ENCODE measurements at regions of chr20 and their contacts with region 1.

Region 1: DNA sequence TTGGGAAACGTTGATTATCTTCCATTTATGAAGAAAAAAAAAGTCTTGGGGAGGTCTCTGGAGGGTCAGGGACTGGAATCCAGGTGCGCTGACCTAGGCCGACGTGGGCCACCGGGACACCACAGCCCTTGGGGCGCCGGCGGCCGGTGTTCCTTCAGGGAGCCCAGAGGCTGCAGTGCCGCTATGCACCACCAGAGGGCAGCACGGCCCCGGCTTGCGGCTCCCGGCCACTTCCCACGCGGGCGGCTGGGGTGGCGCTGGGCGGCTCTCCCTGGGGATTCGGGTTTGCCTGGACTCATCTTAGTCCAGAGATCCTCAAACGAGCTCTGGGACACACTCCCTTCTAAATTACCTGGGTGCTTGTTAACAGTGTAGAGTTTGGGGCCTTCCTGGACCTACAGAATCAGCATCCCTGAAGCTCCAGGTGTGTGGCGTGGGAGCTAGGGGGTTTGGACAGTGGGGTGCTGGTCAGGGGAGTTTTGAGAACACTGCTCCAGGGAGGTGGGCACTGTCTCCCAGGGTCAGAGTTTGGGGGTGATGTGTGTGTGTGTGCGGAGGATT is 23.0 kb upstream of the GTSF1L start:
- DNase-seq: peak; percentile 92
- ATAC-seq: peak; percentile 10
- H3K4me3 Mint-ChIP-seq: no peak overlapping the region
- H3K27ac Mint-ChIP-seq: peak overlapping the region; percentile 81
- H3K4me1 Mint-ChIP-seq: peaks cover 42% of the 10 kb centered on the region
- H3K27me3 Mint-ChIP-seq: peaks cover 4% of the 10 kb centered on the region

Region 2: GRCh38 chr20:43590392-43591323 is 159.2 kb before region 1 on chr20 and contains the start of gene IFT52:
- CTCF ChIA-PET with region 1: no interaction called
- POLR2A ChIA-PET with region 1: no interaction called
- intact Hi-C with region 1: loop called (anchors 1 kb)
- DNase-seq: peak; percentile 94
- ATAC-seq: peak; percentile 99
- H3K4me3 Mint-ChIP-seq: peak within 1 kb of the TSS; percentile 86
- H3K27ac Mint-ChIP-seq: peak within 1 kb of the TSS; percentile 96
- H3K4me1 Mint-ChIP-seq: peaks cover 12% of the 10 kb centered on the region
- H3K27me3 Mint-ChIP-seq: no peaks in the 10 kb centered on the region
- total RNA-seq, gene IFT52: 14.0 to 14.1 TPM

Region 3: DNA sequence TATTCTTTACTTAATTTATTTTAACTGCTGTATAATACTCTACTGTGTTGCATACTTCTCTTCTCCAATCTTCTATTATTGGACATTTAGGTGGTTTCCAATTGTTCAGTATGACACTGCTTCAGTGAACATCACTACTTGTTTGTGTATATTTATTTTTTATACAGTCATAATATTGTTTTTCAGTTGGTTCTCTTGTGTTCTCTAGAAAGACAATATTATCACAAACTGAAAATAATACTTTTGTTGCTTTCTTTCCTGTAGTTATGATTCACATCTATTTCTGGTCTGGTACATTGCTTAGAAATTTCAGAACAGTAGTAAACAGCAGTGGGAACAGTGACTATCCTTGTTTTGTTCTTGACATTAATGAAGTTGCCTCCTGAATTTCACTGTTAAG is 39.8 kb after region 1 on chr20:
- CTCF ChIA-PET with region 1: no interaction called
- POLR2A ChIA-PET with region 1: no interaction called
- intact Hi-C with region 1: loop called (anchors 2 to 5 kb)
- DNase-seq: no peak
- ATAC-seq: peak; percentile 51
- H3K4me3 Mint-ChIP-seq: no peak overlapping the region
- H3K27ac Mint-ChIP-seq: no peak overlapping the region
- H3K4me1 Mint-ChIP-seq: peaks cover 11% of the 10 kb centered on the region
- H3K27me3 Mint-ChIP-seq: peaks cover 3% of the 10 kb centered on the region

Region 4: DNA sequence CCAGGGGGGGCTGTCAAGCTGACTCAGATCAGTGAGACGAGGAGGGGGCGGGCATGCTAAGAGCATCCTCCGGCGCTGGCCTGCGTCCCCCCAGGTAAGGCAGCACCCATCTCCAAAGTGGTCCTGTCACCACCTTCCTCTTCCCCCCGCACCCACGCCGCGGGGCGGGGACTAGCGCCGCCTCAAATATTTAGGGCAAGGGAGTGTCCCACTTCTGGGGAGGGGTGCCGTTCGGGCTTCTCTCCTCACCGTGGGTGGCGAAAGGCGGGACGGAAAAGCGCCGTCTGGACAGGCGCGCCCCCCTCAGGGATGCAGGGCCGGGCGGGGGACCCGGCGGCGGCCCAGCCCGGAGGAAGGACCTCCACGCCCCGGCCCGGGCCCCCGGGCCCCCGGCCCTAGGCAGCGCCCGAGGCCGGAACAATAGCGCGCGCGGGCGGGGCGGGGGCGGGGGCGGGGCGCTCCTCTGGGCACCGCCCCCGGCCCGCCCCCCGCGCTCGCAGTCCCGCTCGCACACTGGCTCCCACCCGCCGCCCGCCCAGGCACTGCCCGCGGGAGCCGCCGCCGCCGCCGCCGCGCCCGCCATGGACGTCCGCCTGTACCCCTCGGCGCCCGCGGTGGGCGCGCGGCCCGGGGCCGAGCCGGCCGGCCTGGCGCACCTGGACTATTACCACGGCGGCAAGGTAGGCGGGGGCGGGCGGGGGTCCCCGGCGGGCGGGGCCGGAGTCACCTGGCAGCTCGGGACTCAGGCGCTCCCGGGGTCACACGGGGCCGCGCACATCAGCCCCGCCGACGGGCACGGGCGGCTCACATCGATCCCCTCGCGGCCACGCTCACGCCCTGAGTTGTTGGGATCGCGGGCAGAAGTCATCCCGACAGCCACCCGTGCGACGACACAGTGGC is 164.7 kb after region 1 on chr20 and contains the start of gene TOX2:
- CTCF ChIA-PET with region 1: interaction called, 5 read pairs
- POLR2A ChIA-PET with region 1: no interaction called
- intact Hi-C with region 1: loop called in 1 of 2 experiments (anchors 2 kb)
- DNase-seq: peak; percentile 63
- ATAC-seq: peak; percentile 30
- H3K4me3 Mint-ChIP-seq: peak within 1 kb of the TSS; percentile 76
- H3K27ac Mint-ChIP-seq: peak within 1 kb of the TSS; percentile 53
- H3K4me1 Mint-ChIP-seq: peaks cover 28% of the 10 kb centered on the region
- H3K27me3 Mint-ChIP-seq: peaks cover 45% of the 10 kb centered on the region
- total RNA-seq, gene TOX2: 1.6 to 3.0 TPM

Region 5: DNA sequence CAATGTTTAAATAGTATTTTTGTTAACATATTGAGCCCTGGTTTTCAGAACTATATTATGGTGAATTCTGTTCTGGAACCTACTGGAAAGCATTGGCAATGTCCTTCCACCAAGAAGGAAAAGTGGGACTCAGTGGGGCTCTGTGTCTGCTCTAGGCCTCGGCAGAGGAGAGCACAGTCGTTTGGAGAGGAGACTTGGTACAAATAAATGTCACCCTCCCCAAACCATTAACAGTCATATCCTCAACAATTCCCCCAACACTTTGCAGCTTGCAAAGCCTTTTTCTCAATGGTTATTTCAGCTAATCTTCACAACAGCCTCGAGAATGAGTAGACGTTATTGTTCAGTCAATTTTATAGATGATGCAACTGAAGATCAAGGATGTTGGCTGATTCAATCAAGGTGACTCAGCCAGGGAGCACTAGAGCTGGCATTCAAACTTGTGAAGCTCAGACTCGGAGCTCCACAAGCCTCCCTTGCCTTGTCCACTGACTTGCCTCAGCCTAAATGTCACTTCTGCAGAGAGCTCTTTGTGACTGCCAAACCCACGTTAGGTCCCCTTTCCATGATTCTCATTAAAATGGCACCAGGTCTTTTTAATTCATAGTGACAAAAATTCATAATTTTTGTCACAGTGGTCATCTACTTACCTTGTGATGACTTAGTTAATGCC is 225.4 kb after region 1 on chr20:
- CTCF ChIA-PET with region 1: interaction called, 3 read pairs
- POLR2A ChIA-PET with region 1: no interaction called
- intact Hi-C with region 1: loop called in 1 of 2 experiments (anchors 5 kb)
- DNase-seq: peak; percentile 69
- ATAC-seq: peak; percentile 88
- H3K4me3 Mint-ChIP-seq: no peak overlapping the region
- H3K27ac Mint-ChIP-seq: peak overlapping the region; percentile 86
- H3K4me1 Mint-ChIP-seq: peaks cover 32% of the 10 kb centered on the region
- H3K27me3 Mint-ChIP-seq: peaks cover 2% of the 10 kb centered on the region

Region 6: DNA sequence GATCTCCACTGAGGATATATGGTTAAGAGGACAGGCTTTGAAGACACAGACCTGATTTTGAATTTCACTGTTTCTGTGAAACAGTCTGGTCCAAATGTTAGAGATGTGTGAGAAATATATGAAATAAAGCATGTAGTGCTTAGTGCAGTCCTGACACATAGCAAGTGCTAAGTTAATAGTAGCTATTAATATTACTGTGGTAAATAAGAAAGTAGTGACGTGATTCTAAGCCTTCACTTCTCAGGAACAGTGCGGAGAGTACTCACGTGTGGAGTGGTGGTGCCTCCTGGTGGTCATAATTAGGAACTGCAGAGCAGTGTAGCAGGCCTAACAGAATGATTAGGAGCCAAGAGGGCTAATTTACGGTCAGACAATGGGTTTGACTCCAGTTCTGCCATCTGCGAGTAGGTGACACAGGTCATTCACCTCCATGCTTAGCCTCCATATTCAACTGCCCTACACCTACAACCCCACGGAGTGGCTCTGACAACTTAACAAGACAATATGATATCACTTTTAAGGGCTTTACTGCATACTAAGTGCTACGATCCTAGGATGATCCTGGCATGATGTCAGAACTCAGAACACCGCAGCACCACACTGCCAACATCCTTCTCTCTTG is 330.9 kb after region 1 on chr20:
- CTCF ChIA-PET with region 1: interaction called, 34 read pairs
- POLR2A ChIA-PET with region 1: no interaction called
- intact Hi-C with region 1: loop called (anchors 1 kb)
- DNase-seq: peak; percentile 84
- ATAC-seq: peak; percentile 96
- H3K4me3 Mint-ChIP-seq: peak overlapping the region; percentile 3
- H3K27ac Mint-ChIP-seq: no peak overlapping the region
- H3K4me1 Mint-ChIP-seq: peaks cover 16% of the 10 kb centered on the region
- H3K27me3 Mint-ChIP-seq: no peaks in the 10 kb centered on the region